OCI-LY7 (cell line): ENCODE measurements at regions of chr15 and their contacts with region 1.

Region 1: DNA sequence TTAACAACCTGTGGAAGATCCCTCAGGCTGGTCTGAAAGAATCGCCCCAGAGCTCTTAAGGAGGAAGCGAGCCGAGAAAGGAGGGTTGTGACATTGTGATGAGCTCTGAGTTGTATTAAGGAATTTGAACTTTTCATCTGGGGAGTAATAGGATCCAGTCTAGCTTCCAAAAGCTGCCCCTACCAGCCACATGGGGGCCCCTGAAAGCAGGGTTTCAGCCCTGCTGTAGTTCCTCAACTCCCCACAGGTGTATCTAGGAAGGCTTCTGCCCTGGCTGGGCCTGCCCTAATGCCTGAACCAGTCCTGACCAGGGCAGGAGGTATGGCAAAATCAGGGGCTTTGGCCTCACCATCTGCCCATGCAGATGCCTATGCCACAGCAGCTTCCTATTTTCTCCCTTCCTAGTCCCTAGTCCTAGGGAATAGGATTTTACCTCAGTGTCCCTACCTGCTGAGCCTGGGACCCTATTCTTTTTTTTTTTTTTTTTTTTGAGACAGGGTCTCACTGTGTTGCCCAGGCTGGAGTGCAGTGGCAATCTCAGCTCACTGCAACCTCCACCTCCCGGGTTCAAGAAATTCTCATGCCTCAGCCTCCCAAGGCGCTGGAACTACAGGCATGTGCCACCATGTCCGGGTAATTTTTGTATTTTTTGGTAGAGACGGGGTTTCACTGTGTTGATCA is 5.0 kb upstream of the AP3S2 start:
- DNase-seq: peak; percentile 82
- H3K4me3 ChIP-seq: no peak overlapping the region
- H3K27ac ChIP-seq: no peak overlapping the region
- H3K4me1 ChIP-seq: peaks cover 6% of the 10 kb centered on the region
- CTCF ChIP-seq: peak; percentile 86

Region 2: GRCh38 chr15:89802231-89802928 is 96.4 kb before region 1 on chr15:
- CTCF ChIA-PET with region 1: no interaction called
- POLR2A ChIA-PET with region 1: no interaction called
- intact Hi-C with region 1: no loop called
- DNase-seq: no peak
- H3K4me3 ChIP-seq: no peak overlapping the region
- H3K27ac ChIP-seq: no peak overlapping the region
- H3K4me1 ChIP-seq: no peaks in the 10 kb centered on the region
- CTCF ChIP-seq: no peak

Region 3: DNA sequence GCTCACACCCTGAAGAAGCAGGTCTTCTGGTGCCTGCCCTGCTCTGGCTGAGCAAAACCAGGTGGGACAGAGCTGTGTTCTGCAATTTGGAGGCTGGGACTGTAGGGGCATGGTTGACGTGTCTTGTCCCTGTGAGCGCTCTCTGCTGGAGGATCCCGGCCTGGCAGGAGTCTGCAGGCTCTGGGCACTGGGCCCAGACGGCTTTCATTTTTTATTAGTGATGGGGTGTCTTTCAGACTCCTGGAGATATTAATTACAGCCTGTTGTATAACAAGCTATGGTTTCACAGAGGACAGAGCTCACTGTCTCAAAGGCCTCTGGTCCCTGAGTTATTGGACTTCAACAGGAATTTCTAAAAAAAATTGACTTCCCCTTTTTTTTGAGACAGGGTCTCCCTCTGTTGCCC is 72.8 kb after region 1 on chr15:
- CTCF ChIA-PET with region 1: no interaction called
- POLR2A ChIA-PET with region 1: interaction called, 4 read pairs
- intact Hi-C with region 1: loop called (anchors 1 kb)
- DNase-seq: peak; percentile 78
- H3K4me3 ChIP-seq: no peak overlapping the region
- H3K27ac ChIP-seq: no peak overlapping the region
- H3K4me1 ChIP-seq: peaks cover 16% of the 10 kb centered on the region
- CTCF ChIP-seq: peak; percentile 84

Region 4: GRCh38 chr15:90071208-90071807 is 172.6 kb after region 1 on chr15:
- CTCF ChIA-PET with region 1: no interaction called
- POLR2A ChIA-PET with region 1: interaction called, 3 read pairs
- intact Hi-C with region 1: loop called (anchors 1 kb)
- DNase-seq: peak; percentile 88
- H3K4me3 ChIP-seq: no peak overlapping the region
- H3K27ac ChIP-seq: no peak overlapping the region
- H3K4me1 ChIP-seq: peaks cover 20% of the 10 kb centered on the region
- CTCF ChIP-seq: peak; percentile 95

Region 5: DNA sequence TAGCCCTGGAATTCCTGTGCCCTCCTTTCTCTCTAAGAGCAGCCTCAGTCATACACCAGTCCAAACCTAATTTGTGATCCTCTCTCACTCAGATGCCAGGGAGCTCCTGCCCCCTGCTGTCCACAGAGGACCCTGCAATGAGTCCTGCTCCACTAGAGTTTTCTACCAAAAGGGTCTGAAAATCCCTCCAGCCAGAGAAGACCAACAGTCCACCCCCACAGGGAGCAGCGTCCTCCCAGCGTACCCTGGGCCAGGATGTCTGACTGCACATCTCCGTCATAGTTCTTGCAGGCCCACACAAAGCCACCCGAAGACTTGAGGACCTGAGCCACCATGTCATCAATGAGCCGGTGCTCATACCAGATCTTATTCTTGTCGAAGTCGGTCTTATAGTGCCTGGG is 188.1 kb after region 1 on chr15:
- CTCF ChIA-PET with region 1: interaction called, 4 read pairs
- POLR2A ChIA-PET with region 1: no interaction called
- intact Hi-C with region 1: loop called (anchors 1 kb)
- DNase-seq: peak; percentile 69
- H3K4me3 ChIP-seq: no peak overlapping the region
- H3K27ac ChIP-seq: no peak overlapping the region
- H3K4me1 ChIP-seq: peaks cover 27% of the 10 kb centered on the region
- CTCF ChIP-seq: peak; percentile 95